ENCODE measurements at regions of chr11 and their contacts with region 1.

Region 1: DNA sequence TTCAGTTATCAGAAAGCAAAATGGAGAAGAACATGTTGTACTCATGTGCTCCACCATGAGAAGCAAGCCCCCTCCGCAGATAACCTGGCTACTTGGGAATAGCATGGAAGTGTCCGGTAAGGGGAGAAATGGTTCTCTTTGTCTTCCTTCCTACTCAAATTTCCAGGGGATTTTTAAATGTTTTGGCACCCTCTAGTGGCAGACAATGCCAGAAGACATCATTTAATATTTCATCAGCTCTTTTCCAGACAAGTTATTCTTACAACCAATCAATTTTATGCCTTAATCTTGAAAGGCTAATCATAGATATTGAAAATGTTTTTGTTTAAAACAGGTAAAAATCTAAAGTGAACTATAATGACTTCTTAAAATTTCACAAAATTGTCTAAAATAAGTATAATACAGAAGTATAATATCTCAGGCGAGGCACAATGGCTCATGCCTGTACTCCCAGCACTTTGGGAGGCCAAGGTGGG is 15.7 kb downstream of the CRTAM start:
- DNase-seq: peak; percentile 63
- H3K4me3 ChIP-seq: no peak overlapping the region
- H3K27ac ChIP-seq: no peak overlapping the region
- H3K4me1 ChIP-seq: no peaks in the 10 kb centered on the region
- H3K27me3 ChIP-seq: no peaks in the 10 kb centered on the region
- CTCF ChIP-seq: peak; percentile 74

Region 2: GRCh38 chr11:122584670-122585069 is 269.3 kb before region 1 on chr11:
- intact Hi-C with region 1: loop called (anchors 5 kb)
- DNase-seq: no peak
- H3K4me3 ChIP-seq: no peak overlapping the region
- H3K27ac ChIP-seq: no peak overlapping the region
- H3K4me1 ChIP-seq: no peaks in the 10 kb centered on the region
- H3K27me3 ChIP-seq: no peaks in the 10 kb centered on the region
- CTCF ChIP-seq: no peak

Region 3: GRCh38 chr11:122633219-122633829 is 220.7 kb before region 1 on chr11:
- intact Hi-C with region 1: loop called (anchors 5 kb)
- DNase-seq: no peak
- H3K4me3 ChIP-seq: no peak overlapping the region
- H3K27ac ChIP-seq: no peak overlapping the region
- H3K4me1 ChIP-seq: no peaks in the 10 kb centered on the region
- H3K27me3 ChIP-seq: no peaks in the 10 kb centered on the region
- CTCF ChIP-seq: no peak

Region 4: DNA sequence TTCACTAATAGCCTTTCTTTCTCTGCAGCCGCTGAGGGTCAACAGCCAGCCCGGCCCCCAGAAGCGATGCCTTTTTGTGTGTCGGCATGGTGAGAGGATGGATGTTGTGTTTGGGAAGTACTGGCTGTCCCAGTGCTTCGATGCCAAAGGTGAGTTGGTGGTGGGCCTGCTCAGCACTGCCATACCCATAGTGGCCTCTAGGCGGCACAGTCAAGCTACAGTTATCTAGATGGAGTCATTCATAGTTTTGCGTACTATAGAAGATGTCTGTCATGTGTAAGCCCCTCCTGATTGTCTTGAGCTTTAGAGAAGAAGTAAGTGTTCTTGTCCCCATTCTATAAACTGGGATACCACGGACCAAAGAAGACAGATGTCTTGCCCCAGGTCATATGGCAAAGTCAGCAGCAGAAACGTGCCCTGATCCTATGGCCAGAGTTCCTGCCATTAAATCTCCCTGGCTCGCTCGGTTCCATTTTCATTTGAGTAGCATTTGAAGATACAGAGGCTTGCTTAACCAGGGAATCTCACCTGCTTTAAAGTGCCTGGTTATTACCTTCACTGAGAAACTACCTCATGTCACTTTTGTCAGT is 57.8 kb before region 1 on chr11:
- intact Hi-C with region 1: loop called (anchors 5 kb)
- DNase-seq: peak; percentile 49
- H3K4me3 ChIP-seq: no peak overlapping the region
- H3K27ac ChIP-seq: no peak overlapping the region
- H3K4me1 ChIP-seq: no peaks in the 10 kb centered on the region
- H3K27me3 ChIP-seq: no peaks in the 10 kb centered on the region
- CTCF ChIP-seq: peak; percentile 83